Activated CD8-positive, alpha-beta memory T cell treated with anti-CD3 and anti-CD28 coated beads, Interleukin-2, amount 10 ng/mL, durations not matched to agents 7 days and 5 days (primary cell): ENCODE measurements at regions of chr2 and their contacts with region 1.

Region 1: DNA sequence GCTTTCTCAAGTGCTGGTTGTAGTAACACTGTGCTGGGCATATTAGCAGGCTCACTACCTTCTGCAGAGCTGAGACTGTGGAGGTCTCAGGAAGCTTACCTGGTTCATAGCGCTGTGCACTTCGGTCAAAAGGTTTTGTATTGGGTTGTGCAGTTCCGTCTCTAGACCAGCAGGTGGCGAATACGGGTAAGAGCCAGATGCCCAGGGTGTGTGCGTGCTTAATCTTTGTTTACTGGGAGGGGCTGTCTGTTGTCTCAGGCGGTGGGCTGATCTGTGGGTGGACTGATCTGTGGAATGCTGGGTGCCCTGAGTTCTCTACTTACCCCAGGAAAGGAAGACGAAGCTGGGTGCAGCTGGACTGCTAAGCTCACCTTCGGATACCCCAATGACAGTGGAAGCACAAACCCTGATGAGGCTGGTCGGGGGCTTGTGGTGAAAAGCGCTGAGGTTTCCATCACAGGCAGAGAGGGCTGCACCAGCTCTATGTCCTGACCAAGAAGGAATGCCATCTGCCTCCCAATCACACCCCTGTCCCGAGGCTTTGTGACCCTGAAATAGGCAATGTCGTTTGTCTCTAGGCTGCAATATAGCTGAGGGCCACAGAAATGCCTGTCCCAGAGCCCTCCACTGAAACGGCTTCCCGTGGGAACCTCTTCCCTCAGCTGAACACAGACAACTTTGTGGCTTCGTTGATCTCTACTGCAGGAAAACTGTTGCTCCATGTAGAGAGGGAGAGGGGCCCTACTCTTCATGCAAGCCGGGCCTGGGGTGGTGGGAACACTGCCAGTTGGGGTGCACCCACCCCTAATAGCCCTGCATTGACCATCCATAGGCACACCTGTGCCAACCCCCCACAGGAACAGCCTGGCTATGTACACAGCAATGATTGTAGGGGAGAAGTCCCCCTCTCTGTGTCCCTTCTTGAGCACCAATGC is 45.9 kb upstream of the FAM117B start:
- DNase-seq: peak; percentile 75
- ATAC-seq: peak; percentile 98
- H3K4me3 Mint-ChIP-seq: no peak overlapping the region
- H3K27ac Mint-ChIP-seq: no peak overlapping the region
- H3K4me1 Mint-ChIP-seq: peaks cover 5% of the 10 kb centered on the region
- H3K27me3 Mint-ChIP-seq: peaks cover 5% of the 10 kb centered on the region

Region 2: GRCh38 chr2:202545523-202545922 is 43.4 kb before region 1 on chr2:
- CTCF ChIA-PET with region 1: no interaction called
- DNase-seq: no peak
- ATAC-seq: no peak
- H3K4me3 Mint-ChIP-seq: no peak overlapping the region
- H3K27ac Mint-ChIP-seq: no peak overlapping the region
- H3K4me1 Mint-ChIP-seq: no peaks in the 10 kb centered on the region
- H3K27me3 Mint-ChIP-seq: no peaks in the 10 kb centered on the region

Region 3: DNA sequence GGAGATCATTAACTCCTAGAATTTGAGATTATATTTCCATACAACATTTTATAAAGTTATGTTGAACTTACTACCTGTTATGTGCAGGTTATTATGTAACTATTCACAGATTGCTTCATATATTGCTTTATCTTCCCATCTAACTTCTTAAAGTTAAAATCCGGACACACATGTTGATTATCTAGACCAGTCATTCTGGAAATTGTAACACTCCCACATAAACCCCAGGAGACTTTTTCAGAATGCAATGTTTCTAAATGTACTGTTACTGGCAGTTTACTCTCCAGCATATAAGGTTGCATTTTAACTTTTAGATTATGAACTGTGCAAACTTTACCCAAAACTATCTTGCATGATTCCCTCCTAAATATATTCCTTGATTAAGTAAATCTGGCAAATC is 24.7 kb before region 1 on chr2:
- CTCF ChIA-PET with region 1: no interaction called
- DNase-seq: no peak
- ATAC-seq: no peak
- H3K4me3 Mint-ChIP-seq: no peak overlapping the region
- H3K27ac Mint-ChIP-seq: no peak overlapping the region
- H3K4me1 Mint-ChIP-seq: no peaks in the 10 kb centered on the region
- H3K27me3 Mint-ChIP-seq: no peaks in the 10 kb centered on the region

Region 4: DNA sequence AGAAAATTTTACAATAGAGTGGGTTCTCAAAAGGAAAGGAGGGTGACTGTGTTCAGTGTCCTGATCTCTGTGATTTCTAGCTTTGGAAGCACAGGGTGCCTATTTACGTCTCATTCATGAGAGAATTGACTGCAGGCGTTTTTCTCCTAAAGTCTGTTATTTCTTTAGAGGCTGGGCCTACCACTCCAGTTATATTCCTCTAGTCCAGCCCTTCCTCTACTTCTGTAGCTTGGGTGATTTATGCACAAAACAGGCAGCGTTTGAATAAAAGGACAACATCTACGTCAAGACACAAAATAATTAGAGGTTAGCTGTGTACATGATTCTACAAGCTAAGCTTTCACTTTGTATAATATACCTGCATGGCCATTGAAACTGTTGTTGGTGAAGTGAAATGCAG is 13.4 kb after region 1 on chr2:
- CTCF ChIA-PET with region 1: interaction called, 11 read pairs
- DNase-seq: no peak
- ATAC-seq: no peak
- H3K4me3 Mint-ChIP-seq: no peak overlapping the region
- H3K27ac Mint-ChIP-seq: no peak overlapping the region
- H3K4me1 Mint-ChIP-seq: no peaks in the 10 kb centered on the region
- H3K27me3 Mint-ChIP-seq: no peaks in the 10 kb centered on the region

Region 5: DNA sequence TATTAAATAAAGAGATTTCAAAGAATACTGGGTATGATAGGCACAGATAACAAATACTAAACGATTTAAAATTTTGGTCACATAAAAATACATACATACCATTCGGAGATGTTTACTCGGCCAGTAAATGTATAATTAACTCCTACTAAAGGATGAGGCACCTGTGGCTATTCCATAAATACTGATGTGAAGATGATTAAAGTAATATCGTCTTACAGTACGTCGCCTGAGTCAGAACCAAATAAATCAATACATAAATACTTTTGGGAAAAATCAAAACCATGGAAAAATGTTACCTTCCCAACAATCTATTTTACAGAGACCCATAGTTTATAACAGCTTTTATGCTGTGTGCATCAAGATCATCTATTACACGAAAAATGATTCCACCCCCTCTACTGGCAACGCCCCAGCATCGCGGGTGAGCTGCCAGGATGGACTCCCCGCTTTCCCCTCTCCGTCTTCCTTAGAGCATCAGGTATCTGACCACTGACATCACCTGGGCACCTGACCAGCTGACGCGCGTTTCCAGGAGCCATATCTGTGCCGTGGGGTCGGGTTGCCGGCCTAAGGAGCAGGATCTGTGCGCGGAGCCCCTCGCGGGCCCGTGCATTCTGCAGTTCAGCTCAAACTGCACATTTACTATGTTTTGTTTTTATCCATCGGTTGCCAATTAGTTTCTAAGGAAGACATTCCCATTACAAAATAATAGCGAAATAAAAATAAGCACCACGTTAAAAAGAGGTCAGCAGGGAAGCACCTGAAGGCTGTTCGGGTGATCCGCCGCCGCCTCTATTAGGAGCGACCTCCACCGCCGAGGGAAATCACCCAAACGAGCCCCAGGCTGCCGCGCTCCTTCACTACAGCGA is 281.8 kb after region 1 on chr2:
- CTCF ChIA-PET with region 1: interaction called, 42 read pairs
- DNase-seq: peak; percentile 82
- ATAC-seq: peak; percentile 84
- H3K4me3 Mint-ChIP-seq: peak overlapping the region; percentile 91
- H3K27ac Mint-ChIP-seq: peak overlapping the region; percentile 81
- H3K4me1 Mint-ChIP-seq: peaks cover 12% of the 10 kb centered on the region
- H3K27me3 Mint-ChIP-seq: no peaks in the 10 kb centered on the region